ENCODE measurements at regions of chr10 and their contacts with region 1.

Region 1: GRCh38 chr10:122980209-122981065 is at the start of gene PSTK:
- DNase-seq: peak; percentile 91 to 94
- ATAC-seq: peak; percentile 96 to 98
- H3K4me3 ChIP-seq: peak within 1 kb of the TSS; percentile 48
- H3K27ac ChIP-seq: peak within 1 kb of the TSS; percentile 88 to 98
- H3K4me1 ChIP-seq: 0 out of 3 replicates have a peak, but pooled peaks cover 4% of the 10 kb centered on the region
- CTCF ChIP-seq: peak; percentile 65
- EP300 ChIP-seq: no peak
- POLR2A ChIP-seq: peak; percentile 62
- RAD21 ChIP-seq: peak in 1 of 2 experiments; percentile 14; a peak in 2 of 5 replicates
- polyA plus RNA-seq, gene PSTK: 8.9 and 9.0 TPM in 2 replicates

Region 2: DNA sequence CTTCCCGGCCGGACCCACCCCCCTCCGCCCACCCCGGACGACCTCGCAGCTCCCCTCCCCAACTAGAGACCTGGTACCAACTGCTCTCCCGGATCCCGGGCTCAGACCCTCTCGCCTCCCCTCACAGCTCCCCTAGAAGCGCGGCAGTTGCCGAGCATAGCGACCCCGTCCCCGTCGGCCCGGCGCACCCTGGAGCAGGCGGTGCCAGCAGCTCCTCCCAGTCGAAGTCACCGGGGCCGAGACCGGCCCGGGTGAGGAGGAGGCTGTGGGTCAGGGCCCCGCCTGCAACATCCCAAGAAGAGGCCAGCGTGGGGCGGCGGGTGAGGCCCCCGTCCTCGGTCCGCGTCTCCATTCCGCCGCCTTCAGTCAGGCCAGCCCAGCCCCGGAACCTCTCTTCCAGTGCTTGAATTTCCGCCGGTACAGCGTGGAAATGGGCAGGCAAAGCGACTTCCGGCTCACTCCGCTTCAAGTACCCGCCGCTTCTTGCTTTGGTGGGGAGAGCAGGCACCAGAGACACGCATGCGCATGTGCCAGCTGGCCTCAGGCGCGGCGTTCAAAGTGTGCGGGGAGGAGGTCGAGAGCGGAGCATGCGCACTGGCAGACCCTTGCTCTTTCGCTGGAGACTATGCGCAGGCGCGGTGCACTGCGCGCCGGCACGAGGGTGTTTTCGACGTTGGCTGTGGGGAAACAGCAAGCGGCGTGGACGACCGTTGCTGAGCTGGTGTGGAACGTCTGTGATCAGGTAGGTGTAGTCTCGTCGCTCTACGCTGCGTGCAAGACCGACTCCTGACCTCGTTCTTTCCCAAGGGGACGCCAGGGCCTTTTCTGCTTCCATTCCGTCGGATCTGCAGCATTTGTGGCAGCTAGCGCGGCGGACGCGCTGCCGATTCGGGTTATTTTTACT is 26.4 kb before region 1 on chr10 and contains the start of gene C10orf88:
- CTCF ChIA-PET with region 1: interaction called, 4 read pairs
- POLR2A ChIA-PET with region 1: interaction called, 12 read pairs
- DNase-seq: peak; percentile 94 to 99
- ATAC-seq: peak; percentile 99 to 100
- H3K4me3 ChIP-seq: peak within 1 kb of the TSS; percentile 96
- H3K27ac ChIP-seq: peak within 1 kb of the TSS; percentile 97
- H3K4me1 ChIP-seq: peaks cover 18% of the 10 kb centered on the region
- CTCF ChIP-seq: no peak
- EP300 ChIP-seq: no peak
- POLR2A ChIP-seq: peak; percentile 66
- RAD21 ChIP-seq: peak in 1 of 2 experiments; percentile 23; a peak in 2 of 5 replicates
- polyA plus RNA-seq, gene C10orf88: 10.4 and 11.0 TPM in 2 replicates

Region 3: GRCh38 chr10:122962405-122962804 is 18.0 kb before region 1 on chr10:
- CTCF ChIA-PET with region 1: interaction called, 11 read pairs
- POLR2A ChIA-PET with region 1: interaction called, 3 read pairs
- DNase-seq: no peak
- ATAC-seq: no peak
- H3K4me3 ChIP-seq: no peak overlapping the region
- H3K27ac ChIP-seq: no peak overlapping the region
- H3K4me1 ChIP-seq: no peaks in the 10 kb centered on the region
- CTCF ChIP-seq: no peak
- EP300 ChIP-seq: no peak
- POLR2A ChIP-seq: no peak
- RAD21 ChIP-seq: no peak

Region 4: GRCh38 chr10:122999347-122999746 is 18.9 kb after region 1 on chr10:
- CTCF ChIA-PET with region 1: interaction called, 10 read pairs
- POLR2A ChIA-PET with region 1: interaction called, 4 read pairs
- DNase-seq: no peak
- ATAC-seq: no peak
- H3K4me3 ChIP-seq: no peak overlapping the region
- H3K27ac ChIP-seq: no peak overlapping the region
- H3K4me1 ChIP-seq: peaks cover 5% of the 10 kb centered on the region; the same call in 1 of the 3 replicates
- CTCF ChIP-seq: no peak
- EP300 ChIP-seq: no peak
- POLR2A ChIP-seq: no peak
- RAD21 ChIP-seq: no peak

Region 5: DNA sequence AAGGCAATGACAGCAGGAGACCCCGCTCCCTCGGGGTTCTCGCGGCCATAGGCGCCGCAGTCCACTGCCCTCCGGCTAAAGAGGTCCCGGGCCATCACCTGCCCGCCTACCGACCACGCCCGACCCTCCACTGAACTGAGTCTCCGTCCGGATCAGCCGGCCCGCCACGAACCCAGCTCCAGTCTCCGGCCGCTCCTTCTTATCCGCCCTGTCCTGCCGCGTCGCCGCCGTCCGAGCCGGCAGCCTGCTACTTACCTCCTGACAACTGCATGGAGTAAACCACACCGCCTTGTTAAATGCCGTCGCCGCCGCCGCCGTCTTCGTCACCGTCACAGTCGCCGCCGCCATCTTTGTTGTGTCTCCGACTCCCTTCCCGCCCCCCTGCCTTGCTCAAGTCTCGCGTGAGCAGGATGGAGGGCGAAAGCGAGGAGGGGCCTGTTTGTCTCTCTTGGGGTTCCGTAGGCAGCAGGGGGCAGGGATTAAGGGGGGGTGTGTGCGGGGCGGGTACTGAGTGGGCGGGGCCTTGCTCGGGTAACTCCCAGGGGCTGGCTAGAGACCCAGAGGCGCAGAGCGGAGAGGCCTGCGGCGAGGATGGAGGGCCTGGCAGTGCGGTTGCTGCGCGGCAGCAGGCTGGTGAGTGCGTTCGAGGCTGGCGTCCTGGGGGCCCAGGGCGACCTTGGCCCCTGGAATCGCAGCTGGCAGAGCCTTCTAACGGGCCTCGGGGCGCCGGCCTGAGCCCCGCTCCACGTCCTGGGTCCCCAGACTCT is 28.2 kb after region 1 on chr10 and contains the starts of genes ACADSB and IKZF5:
- CTCF ChIA-PET with region 1: interaction called, 7 read pairs
- POLR2A ChIA-PET with region 1: interaction called, 27 read pairs
- DNase-seq: peak; percentile 97
- ATAC-seq: peak; percentile 90 to 97
- H3K4me3 ChIP-seq: peak within 1 kb of the TSS; percentile 85
- H3K27ac ChIP-seq: peak within 1 kb of the TSS; percentile 84 to 93
- H3K4me1 ChIP-seq: peaks cover 9% of the 10 kb centered on the region; the same call in 2 of the 3 replicates
- CTCF ChIP-seq: no peak
- EP300 ChIP-seq: no peak
- POLR2A ChIP-seq: peak; percentile 95
- RAD21 ChIP-seq: no peak
- polyA plus RNA-seq, gene ACADSB: 16.1 and 18.5 TPM in 2 replicates
- polyA plus RNA-seq, gene IKZF5: 8.4 and 10.2 TPM in 2 replicates

Region 6: GRCh38 chr10:123132576-123133477 is 152.4 kb after region 1 on chr10:
- CTCF ChIA-PET with region 1: interaction called, 10 read pairs
- POLR2A ChIA-PET with region 1: no interaction called
- DNase-seq: peak; percentile 88 to 90
- ATAC-seq: peak; percentile 72 to 88
- H3K4me3 ChIP-seq: peak overlapping the region; percentile 38
- H3K27ac ChIP-seq: no peak overlapping the region
- H3K4me1 ChIP-seq: peaks cover 25% of the 10 kb centered on the region; the same call in 2 of the 3 replicates
- CTCF ChIP-seq: peak; percentile 88
- EP300 ChIP-seq: no peak
- POLR2A ChIP-seq: no peak
- RAD21 ChIP-seq: peak; percentile 90 to 93

Measured in A549 (cell line).